ENCODE measurements at regions of chr1 and their contacts with region 1.

Region 1: GRCh38 chr1:157691285-157691920 is 9.2 kb downstream of the FCRL3 start:
- DNase-seq: peak; percentile 62
- ATAC-seq: peak; percentile 80
- H3K4me3 ChIP-seq: no peak overlapping the region
- H3K27ac ChIP-seq: no peak overlapping the region
- H3K4me1 ChIP-seq: no peaks in the 10 kb centered on the region
- H3K27me3 ChIP-seq: peaks cover 12% of the 10 kb centered on the region; the same call in 1 of the 2 replicates
- CTCF ChIP-seq: peak; percentile 80

Region 2: DNA sequence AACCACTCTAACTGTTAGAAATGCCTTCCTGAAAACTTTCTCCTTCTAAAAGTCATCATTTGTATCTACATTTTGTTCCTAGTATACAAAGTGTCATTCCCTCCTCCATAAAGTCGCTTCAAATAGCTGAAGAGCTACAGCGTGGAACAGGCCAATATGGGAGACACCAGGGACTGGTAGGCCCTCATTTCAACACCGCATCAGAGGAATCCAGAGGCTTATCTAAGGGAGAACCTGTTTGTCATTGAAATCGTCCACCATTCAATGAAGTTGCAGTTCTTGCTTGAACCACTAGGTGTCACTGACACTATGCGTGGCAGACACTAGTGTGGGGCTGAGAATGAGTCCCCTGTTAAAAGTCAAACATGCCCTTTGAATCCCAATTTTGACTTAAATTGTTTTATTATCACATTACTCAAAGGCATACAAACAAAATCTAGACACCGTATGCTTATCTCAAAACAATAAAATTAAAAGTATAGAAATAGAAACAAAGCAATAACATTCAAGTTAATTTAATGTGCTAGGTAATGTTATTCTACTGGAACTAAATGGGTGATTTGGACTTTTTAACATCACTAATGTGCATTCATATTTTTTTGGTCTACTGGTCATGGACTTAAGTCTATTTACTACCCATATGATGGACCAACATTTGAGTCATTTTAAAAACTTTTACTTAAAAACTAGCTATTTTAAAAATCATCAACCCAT is 321.4 kb before region 1 on chr1:
- CTCF ChIA-PET with region 1: no interaction called
- POLR2A ChIA-PET with region 1: no interaction called
- intact Hi-C with region 1: loop called (anchors 5 kb)
- DNase-seq: peak; percentile 88
- ATAC-seq: peak; percentile 88
- H3K4me3 ChIP-seq: no peak overlapping the region
- H3K27ac ChIP-seq: no peak overlapping the region
- H3K4me1 ChIP-seq: no peaks in the 10 kb centered on the region
- H3K27me3 ChIP-seq: peaks cover 24% of the 10 kb centered on the region
- CTCF ChIP-seq: peak; percentile 89

Region 3: GRCh38 chr1:157580179-157580827 is 111.1 kb before region 1 on chr1:
- CTCF ChIA-PET with region 1: interaction called, 9 read pairs
- POLR2A ChIA-PET with region 1: no interaction called
- intact Hi-C with region 1: loop called (anchors 1 kb)
- DNase-seq: peak; percentile 90
- ATAC-seq: peak; percentile 70
- H3K4me3 ChIP-seq: no peak overlapping the region
- H3K27ac ChIP-seq: no peak overlapping the region
- H3K4me1 ChIP-seq: no peaks in the 10 kb centered on the region
- H3K27me3 ChIP-seq: peaks cover 58% of the 10 kb centered on the region
- CTCF ChIP-seq: peak; percentile 95

Region 4: GRCh38 chr1:157758018-157758417 is 66.6 kb after region 1 on chr1:
- CTCF ChIA-PET with region 1: no interaction called
- POLR2A ChIA-PET with region 1: no interaction called
- intact Hi-C with region 1: no loop called
- DNase-seq: no peak
- ATAC-seq: no peak
- H3K4me3 ChIP-seq: no peak overlapping the region
- H3K27ac ChIP-seq: no peak overlapping the region
- H3K4me1 ChIP-seq: no peaks in the 10 kb centered on the region
- H3K27me3 ChIP-seq: peaks cover 5% of the 10 kb centered on the region; the same call in 1 of the 2 replicates
- CTCF ChIP-seq: no peak

Region 5: DNA sequence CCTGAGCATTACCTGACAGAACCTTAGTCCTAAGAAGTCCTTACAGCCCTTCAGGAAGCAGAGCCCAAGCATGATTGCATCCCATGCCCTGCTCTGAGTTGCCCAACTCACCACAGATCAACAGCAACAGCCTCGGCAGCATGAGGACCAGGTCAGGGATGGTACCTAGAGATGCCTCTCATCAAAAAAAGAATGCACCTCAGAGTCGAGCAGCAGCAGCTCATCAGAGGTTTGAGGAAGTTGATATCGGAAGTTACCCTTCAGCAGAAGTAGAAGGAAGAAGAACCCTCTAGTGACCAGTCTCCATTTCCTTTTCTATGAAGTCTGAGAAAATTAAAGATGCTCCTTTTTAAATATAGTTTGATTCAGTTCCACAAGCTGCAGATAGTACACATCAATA is 128.5 kb after region 1 on chr1 and contains the start of gene FCRL1:
- CTCF ChIA-PET with region 1: no interaction called
- POLR2A ChIA-PET with region 1: no interaction called
- intact Hi-C with region 1: no loop called
- DNase-seq: no peak
- ATAC-seq: no peak
- H3K4me3 ChIP-seq: no peak within 1 kb of the TSS
- H3K27ac ChIP-seq: no peak within 1 kb of the TSS
- H3K4me1 ChIP-seq: no peaks in the 10 kb centered on the region
- H3K27me3 ChIP-seq: peaks cover 48% of the 10 kb centered on the region
- CTCF ChIP-seq: no peak
- total RNA-seq, gene FCRL1: not detected in 2 replicates